ENCODE measurements at regions of chr19 and their contacts with region 1.

Region 1: DNA sequence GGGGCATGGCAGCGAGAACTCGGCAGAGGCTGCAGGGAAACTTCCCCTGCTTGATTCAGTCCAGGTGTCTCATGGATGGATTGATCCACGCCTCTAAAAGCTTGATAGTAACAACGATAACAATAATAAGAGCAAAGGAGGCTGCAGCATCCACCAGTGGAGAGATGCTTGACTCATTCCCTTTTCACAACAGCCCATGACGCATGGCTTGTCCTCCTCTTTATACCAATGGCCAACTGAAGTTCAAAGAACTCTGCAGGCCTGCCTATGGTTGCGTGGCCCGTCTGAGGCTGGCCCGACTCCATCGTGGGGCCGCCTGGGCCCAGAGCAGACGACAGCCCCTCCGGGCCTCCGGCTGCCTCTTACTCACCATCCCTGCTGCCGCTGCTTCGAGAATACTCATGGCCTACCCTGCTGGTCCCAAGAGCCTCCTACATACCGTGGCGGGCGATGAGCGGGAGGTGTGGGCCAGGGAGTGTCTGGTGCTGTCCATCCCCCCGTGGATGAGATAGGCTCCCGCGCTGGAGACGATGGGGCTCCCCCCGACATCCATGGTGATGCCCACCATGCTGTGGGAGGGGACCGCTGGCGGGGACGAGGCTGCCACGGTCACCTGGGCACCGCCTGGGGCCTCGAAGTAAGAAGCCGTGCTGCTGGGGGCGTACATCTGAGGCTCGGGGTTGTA is 61.7 kb upstream of the RANBP3 start:
- DNase-seq: peak in 2 of 5 donors; percentile 7 to 29
- H3K4me3 ChIP-seq: no peak overlapping the region
- H3K27ac ChIP-seq: no peak overlapping the region
- H3K4me1 ChIP-seq: no peaks in the 10 kb centered on the region
- H3K27me3 ChIP-seq: no peaks in the 10 kb centered on the region
- CTCF ChIP-seq: no peak
- EP300 ChIP-seq: no peak
- POLR2A ChIP-seq: no peak

Region 2: DNA sequence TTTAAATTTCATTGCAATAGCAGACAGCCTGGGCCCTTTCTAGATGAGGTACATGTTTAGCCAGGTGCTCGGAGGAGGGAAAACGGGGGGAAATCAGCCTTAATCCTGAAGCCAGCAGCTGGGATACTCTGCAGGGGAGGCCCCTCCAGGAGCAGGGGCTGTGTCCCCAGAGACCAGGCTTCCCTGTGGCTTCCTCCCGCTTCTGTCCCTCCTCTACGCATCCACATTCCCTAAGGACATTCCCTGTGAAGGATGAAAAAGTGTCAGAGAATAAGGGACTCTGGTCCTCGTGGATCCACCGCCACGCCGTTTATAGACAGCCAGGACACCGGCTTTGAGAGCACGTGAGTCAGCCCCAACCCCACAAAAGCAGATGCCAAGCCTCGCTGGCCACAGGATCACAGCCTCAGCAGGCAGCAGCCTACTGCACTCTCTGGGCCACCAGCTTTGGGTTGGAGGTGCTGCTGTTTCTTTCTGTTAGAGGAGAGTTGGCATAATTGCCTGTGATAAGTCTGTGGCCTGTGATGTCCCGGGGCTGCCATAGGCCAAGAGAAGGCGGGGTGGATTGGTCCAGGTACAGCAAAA is 25.0 kb before region 1 on chr19:
- intact Hi-C with region 1: loop called in 1 of 4 experiments (anchors 1 kb)
- DNase-seq: peak in 1 of 5 donors; percentile 7
- H3K4me3 ChIP-seq: no peak overlapping the region
- H3K27ac ChIP-seq: no peak overlapping the region
- H3K4me1 ChIP-seq: no peaks in the 10 kb centered on the region
- H3K27me3 ChIP-seq: no peaks in the 10 kb centered on the region
- CTCF ChIP-seq: no peak
- EP300 ChIP-seq: no peak
- POLR2A ChIP-seq: no peak

Region 3: DNA sequence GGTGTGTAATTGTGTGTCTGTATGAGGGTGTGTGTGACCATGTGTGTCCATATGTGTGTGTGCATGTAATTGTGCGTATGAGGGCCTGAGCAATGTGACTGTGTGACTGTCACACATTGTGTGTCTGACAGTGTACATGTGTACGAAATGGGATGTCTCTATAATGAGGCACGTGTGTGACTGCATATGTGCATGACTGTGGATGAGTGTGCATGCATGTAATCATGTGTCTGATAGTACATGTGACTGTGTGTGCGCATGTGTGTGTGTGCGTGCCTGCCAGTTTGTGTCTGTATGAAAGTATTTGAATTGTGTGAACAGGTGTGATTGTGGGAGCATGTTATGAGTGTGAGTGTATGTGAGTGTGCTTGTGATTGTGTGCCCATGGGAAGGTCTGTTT is 93.5 kb after region 1 on chr19:
- intact Hi-C with region 1: loop called in 1 of 4 experiments (anchors 5 kb)
- DNase-seq: no peak
- H3K4me3 ChIP-seq: no peak overlapping the region
- H3K27ac ChIP-seq: no peak overlapping the region
- H3K4me1 ChIP-seq: no peaks in the 10 kb centered on the region
- H3K27me3 ChIP-seq: no peaks in the 10 kb centered on the region
- CTCF ChIP-seq: no peak
- EP300 ChIP-seq: no peak
- POLR2A ChIP-seq: no peak

Region 4: GRCh38 chr19:6654347-6655310 is 614.9 kb after region 1 on chr19:
- intact Hi-C with region 1: no loop called
- DNase-seq: no peak
- H3K4me3 ChIP-seq: no peak overlapping the region
- H3K27ac ChIP-seq: no peak overlapping the region
- H3K4me1 ChIP-seq: no peaks in the 10 kb centered on the region
- H3K27me3 ChIP-seq: no peaks in the 10 kb centered on the region
- CTCF ChIP-seq: no peak
- EP300 ChIP-seq: no peak
- POLR2A ChIP-seq: no peak